ENCODE measurements at regions of chr3 and their contacts with region 1.

Region 1: GRCh38 chr3:40524568-40525285 is at the start of gene ZNF621:
- DNase-seq: peak; percentile 79 to 98 (median 90)

Region 2: DNA sequence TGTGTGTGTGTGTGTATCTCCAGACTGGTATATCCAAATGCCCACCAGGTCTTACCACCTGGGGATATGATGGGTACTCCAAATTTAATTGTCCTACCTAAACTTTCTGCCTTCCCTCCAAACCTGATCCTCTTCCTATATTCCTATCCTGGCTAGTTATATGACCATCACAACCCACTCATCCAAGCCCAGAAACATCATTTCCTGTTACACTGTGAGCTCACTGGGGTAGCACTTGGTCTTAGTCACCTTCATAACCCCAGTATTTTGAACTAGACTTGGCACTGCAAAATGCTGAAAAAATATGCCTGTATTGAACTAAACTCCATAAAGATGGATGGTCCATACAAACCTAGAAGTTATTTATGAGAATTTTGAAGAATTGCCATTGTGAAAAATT is 394.0 kb before region 1 on chr3:
- intact Hi-C with region 1: no loop called
- DNase-seq: no peak

Region 3: GRCh38 chr3:40452876-40453730 is 71.6 kb before region 1 on chr3:
- intact Hi-C with region 1: loop called (anchors 2 kb)
- DNase-seq: peak; percentile 94 to 100 (median 98)

Region 4: DNA sequence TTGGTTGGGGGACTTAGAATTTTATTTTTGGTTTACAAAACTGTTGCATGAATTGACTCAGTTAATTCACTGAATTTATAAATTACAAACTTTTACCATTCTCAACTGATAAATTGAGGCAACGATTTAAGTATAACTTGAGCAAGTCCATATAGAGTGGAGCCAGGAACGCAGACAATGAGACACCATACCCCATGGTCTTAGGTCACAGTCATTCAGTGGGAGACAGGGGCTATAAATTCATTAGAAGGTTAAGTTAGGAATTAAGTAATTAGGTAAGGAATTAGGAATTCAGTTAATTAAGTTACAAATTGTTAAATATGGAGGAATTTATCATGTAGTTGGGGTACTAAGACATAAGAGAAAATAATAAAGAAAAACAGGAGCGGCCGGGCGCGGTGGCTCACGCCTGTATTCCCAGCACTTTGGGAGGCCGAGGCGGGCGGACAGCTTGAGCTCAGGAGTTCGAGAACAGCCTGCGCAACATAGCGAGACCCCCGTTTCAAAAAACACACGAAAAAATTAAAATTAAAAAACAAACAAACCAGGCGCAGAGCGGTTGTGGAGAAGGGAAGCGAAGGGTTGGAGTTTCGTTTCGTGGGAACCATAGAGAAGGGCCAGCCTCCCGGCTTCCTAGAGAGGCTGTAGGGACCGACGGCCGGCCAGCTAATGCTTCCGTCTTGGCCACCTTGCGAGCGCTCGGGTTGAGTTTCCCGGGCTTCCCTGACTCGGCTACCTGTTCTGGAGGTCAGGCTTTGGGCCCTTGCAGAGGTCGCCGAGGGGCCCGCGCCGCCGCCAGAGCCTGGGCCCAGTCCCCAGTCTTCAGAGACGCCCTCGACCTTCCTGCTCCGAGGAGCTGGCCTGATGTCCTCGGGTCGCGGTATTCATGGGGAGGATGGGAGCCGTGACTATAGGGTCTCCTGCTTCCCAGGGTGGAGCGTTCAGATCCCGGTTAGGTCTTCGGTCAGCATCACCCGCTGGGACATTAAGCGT is 48.0 kb before region 1 on chr3 and contains the start of gene ZNF619:
- intact Hi-C with region 1: loop called (anchors 5 kb)
- DNase-seq: peak; percentile 41 to 94 (median 70)

Region 5: GRCh38 chr3:40505599-40506462 is 18.9 kb before region 1 on chr3 and contains the start of gene ZNF620:
- intact Hi-C with region 1: loop called (anchors 2 kb)
- DNase-seq: peak; percentile 68 to 97 (median 78)

Measured in posterior cingulate gyrus (tissue), 11 donors.